AG04450 (cell line): ENCODE measurements at regions of chrX and their contacts with region 1.

Region 1: DNA sequence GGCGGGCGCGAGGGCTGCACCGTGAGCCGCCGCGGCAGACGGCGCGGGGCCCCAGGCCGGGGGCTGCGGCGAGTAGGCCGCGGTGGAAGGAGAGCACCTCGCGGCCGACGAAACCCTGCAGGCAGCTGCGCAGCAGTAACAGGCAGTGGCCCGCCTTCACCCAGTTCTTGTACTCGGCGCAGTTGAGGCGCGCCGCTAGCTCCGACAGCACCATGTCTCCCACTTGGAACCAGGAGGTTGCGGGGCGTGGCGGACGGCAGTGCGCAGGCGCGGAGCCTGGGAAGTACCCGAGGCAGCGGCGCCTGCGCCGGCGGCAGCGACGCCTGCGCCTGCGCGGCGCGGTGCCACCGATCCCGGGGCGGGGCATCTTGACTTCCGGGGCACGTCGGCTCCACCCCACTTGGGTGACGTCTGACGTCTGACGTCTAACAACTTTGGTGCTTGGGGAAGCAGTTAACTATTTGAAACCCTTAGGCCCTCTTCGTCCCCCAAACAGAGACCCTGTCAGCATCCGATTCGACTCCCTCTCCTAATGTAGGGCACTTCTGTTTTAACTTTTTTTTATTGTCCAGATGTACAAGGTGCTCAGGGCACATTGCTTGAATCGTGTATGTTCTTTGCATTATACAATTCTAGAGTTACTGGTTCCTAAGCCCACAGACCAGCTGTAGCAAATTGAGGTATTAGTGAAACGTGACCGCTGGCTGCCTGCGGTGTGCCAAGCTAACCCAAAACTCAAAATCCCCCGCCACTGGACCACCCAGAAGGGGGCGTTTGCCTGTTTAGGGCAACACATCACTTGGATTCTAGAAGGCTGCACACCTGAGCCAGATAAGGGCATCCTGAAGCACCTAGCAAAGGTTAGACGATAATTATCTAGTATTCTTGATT is at the start of gene CXorf38:
- DNase-seq: peak; percentile 54
- H3K4me3 ChIP-seq: peak within 1 kb of the TSS; percentile 69
- H3K27ac ChIP-seq: peak within 1 kb of the TSS; percentile 77
- H3K27me3 ChIP-seq: no peaks in the 10 kb centered on the region
- CTCF ChIP-seq: no peak
- polyA plus RNA-seq, gene CXorf38: 7.7 and 10.1 TPM in 2 replicates

Region 2: DNA sequence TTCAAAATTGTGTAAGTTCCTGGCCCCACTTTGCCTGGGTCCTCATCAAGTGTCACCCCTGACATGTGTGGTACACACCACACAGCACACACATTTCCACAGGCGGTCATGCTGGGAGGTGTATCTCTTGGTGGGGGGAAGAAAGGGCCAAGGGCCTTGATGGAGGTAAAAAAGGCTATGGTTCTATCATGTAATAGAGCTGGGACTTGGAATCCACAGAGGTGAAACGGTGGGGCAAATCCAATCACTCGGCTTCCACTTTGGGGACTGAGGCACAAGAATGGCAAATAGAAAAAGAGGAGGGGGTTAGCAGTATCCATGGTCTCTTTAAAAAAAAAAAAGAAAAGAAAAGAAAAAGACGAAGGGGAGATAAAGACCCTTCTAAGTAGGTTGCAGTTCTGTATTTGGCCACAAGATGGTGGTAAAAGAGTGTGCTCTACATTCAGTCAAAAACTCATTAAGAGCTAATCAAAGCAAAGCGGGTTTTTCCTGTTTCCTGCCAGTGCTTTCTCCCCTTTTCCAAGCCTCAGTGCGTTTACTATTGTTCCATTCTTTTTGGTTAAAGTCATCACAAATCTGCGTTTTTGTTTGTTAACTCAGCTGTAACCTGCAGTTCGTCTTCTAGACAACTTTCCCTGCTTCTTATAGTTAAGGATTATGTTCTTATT is 103.8 kb before region 1 on chrX:
- CTCF ChIA-PET with region 1: interaction called, 15 read pairs
- POLR2A ChIA-PET with region 1: no interaction called
- DNase-seq: peak; percentile 29
- H3K4me3 ChIP-seq: no peak overlapping the region
- H3K27ac ChIP-seq: peak overlapping the region; percentile 61
- H3K27me3 ChIP-seq: no peaks in the 10 kb centered on the region
- CTCF ChIP-seq: peak; percentile 71

Region 3: DNA sequence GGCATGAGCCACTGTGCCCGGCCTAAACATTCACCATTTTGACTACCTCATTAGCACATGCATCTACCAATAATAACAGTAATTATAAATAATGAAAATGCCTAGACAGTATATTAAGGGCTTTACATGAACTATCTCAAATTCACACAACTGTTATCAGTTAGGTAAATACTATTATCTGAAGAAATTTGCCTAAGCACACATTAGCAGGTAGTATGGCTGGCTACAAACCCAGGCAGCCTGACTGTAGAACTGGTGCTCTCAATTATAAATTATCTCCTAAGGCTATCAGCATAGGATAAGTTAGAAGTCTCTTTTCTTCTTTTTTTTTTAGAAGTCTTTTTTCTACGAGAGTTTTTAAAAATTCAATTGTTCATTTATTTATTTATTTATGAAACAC is 13.9 kb after region 1 on chrX:
- CTCF ChIA-PET with region 1: interaction called, 10 read pairs
- POLR2A ChIA-PET with region 1: no interaction called
- DNase-seq: no peak
- H3K4me3 ChIP-seq: no peak overlapping the region
- H3K27ac ChIP-seq: no peak overlapping the region
- H3K27me3 ChIP-seq: no peaks in the 10 kb centered on the region
- CTCF ChIP-seq: no peak

Region 4: GRCh38 chrX:40792433-40792832 is 144.9 kb after region 1 on chrX:
- CTCF ChIA-PET with region 1: interaction called, 49 read pairs
- POLR2A ChIA-PET with region 1: no interaction called
- DNase-seq: no peak
- H3K4me3 ChIP-seq: no peak overlapping the region
- H3K27ac ChIP-seq: no peak overlapping the region
- H3K27me3 ChIP-seq: no peaks in the 10 kb centered on the region
- CTCF ChIP-seq: no peak

Region 5: GRCh38 chrX:40922307-40922706 is 274.8 kb after region 1 on chrX:
- CTCF ChIA-PET with region 1: interaction called, 12 read pairs
- POLR2A ChIA-PET with region 1: no interaction called
- DNase-seq: no peak
- H3K4me3 ChIP-seq: no peak overlapping the region
- H3K27ac ChIP-seq: no peak overlapping the region
- H3K27me3 ChIP-seq: no peaks in the 10 kb centered on the region
- CTCF ChIP-seq: peak; percentile 39

Region 6: DNA sequence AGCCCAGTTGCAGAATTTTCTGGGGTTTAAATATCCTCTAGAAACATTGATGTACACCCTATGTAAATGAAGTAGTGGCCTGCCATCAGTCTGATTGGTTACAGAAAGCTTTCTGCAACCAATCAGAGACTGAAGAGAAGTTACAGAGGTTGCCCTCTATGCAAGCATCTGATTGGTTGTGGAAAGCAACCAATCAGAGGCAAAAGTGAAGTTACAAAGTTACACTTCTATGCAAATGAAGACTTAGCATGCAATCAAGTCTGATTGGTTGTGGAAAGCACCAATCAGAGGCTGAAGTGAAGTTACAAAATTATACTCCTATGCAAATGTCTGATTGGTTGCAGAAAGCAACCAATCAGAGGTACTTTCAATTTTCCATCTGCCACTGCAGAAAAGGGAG is 385.7 kb after region 1 on chrX:
- CTCF ChIA-PET with region 1: no interaction called
- POLR2A ChIA-PET with region 1: no interaction called
- DNase-seq: no peak
- H3K4me3 ChIP-seq: no peak overlapping the region
- H3K27ac ChIP-seq: no peak overlapping the region
- H3K27me3 ChIP-seq: no peaks in the 10 kb centered on the region
- CTCF ChIP-seq: no peak

Region 7: DNA sequence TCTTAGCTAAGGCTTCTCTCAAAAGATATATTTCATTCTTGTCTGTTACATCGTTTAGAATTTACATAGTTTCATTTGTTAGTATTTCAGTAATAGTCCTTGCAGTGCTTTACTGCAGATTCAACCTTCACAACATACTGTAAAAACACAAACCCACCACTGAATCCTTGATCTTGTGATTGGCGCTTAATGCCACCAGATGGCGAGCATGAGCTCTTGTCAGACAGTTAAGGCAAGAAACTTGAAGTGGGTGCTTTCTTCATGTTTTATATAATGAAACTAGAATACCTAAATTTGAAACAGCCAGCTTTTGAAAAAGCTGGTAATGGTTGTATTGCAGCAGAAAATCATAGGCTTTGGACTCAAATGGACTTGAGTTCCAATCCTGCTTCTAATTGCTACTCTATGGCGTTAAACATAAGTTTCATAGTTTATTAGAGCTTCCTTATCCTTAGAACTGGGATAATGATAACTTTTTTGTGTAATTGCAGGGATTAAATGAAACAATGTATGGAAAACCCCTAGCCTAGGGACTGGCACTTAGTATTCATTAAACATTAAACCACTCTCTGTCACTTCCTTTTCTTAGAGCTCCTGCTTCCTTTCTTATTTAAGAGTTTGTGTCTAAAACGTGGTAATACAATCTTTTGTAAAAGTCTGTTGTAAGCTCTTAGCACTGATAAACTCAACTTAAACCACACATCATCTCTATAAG is 532.8 kb after region 1 on chrX:
- CTCF ChIA-PET with region 1: interaction called, 15 read pairs
- POLR2A ChIA-PET with region 1: no interaction called
- DNase-seq: peak; percentile 10
- H3K4me3 ChIP-seq: no peak overlapping the region
- H3K27ac ChIP-seq: no peak overlapping the region
- H3K27me3 ChIP-seq: no peaks in the 10 kb centered on the region
- CTCF ChIP-seq: peak; percentile 67